CD4-positive, alpha-beta memory T cell (primary cell): ENCODE measurements at regions of chr3 and their contacts with region 1.

Region 1: GRCh38 chr3:123584988-123585937 is at the start of gene HACD2:
- DNase-seq: peak; percentile 90 to 96 (median 92)
- H3K4me3 ChIP-seq: peak within 1 kb of the TSS; percentile 80 to 99
- H3K4me3 Mint-ChIP-seq: peak within 1 kb of the TSS in 5 of 8 donors; percentile 88 to 93 (median 92)
- H3K27ac ChIP-seq: peak within 1 kb of the TSS; percentile 78
- H3K27ac Mint-ChIP-seq: peak within 1 kb of the TSS in 6 of 7 donors; percentile 76 to 94 (median 87)
- H3K4me1 ChIP-seq: peaks cover 38% of the 10 kb centered on the region
- H3K4me1 Mint-ChIP-seq: peaks cover 20 to 28% (median 22%) of the 10 kb centered on the region in 4 donors
- H3K27me3 ChIP-seq: no peaks in the 10 kb centered on the region
- H3K27me3 Mint-ChIP-seq: no peaks in the 10 kb centered on the region
- total RNA-seq, gene HACD2: 26.0 to 29.5 TPM

Region 2: DNA sequence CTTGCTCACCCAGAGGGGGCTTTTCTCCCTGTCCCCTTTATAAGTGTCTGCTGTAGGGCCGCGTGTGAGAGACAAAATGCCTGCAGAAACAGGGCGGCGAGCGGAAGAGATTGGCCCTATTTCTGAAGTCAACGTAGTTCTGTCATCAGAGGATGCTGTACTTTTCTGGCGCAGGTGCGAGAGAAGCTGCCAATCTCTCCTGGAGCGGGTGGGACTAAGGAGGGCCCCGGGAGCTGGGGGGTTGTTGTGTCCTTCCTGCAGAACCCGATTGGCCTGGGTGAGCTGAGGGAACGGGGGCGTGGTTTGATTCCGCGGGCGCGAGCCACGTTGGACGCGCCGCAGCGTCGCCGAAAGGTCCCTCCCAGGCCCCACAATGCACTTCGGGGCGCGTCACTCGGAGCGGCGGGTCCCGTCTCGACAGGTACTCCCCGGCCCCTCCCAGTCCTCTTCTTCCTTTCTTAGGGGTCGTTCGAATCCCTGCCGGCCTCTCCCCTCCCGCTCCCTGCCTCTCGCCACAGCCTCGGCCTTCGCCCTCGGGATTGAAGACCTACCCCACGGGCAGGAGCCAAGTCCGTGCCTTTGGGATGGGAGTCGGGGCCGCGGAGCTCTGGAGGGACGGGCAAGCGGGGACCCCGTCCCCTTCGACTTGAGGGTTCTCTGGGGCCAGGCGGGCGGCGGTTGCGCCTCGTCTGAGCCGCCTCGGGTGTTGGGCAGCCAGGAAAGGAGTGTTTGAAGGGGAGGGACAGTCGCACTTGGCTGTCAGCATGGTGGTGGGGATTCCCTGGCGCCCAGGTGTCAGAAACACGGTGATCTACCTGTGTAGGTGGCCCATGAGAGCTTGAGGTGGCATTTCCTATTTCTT is 383.5 kb before region 1 on chr3 and contains the start of gene SEC22A:
- CTCF ChIA-PET with region 1: interaction called, 3 read pairs
- POLR2A ChIA-PET with region 1: interaction called, 6 read pairs
- intact Hi-C with region 1: loop called (anchors 1 kb)
- DNase-seq: peak; percentile 95 to 98 (median 98)
- H3K4me3 ChIP-seq: peak within 1 kb of the TSS; percentile 82 to 91
- H3K4me3 Mint-ChIP-seq: peak within 1 kb of the TSS; percentile 88 to 98 (median 90)
- H3K27ac ChIP-seq: peak within 1 kb of the TSS; percentile 98
- H3K27ac Mint-ChIP-seq: peak within 1 kb of the TSS; percentile 92 to 99 (median 98)
- H3K4me1 ChIP-seq: peaks cover 20% of the 10 kb centered on the region
- H3K4me1 Mint-ChIP-seq: peaks cover 21 to 38% (median 28%) of the 10 kb centered on the region in 4 donors
- H3K27me3 ChIP-seq: no peaks in the 10 kb centered on the region
- H3K27me3 Mint-ChIP-seq: peaks cover 0 to 4% of the 10 kb centered on the region in 2 donors
- total RNA-seq, gene SEC22A: 19.4 to 23.2 TPM

Region 3: GRCh38 chr3:123632161-123632655 is 46.9 kb after region 1 on chr3:
- CTCF ChIA-PET with region 1: no interaction called
- POLR2A ChIA-PET with region 1: no interaction called
- intact Hi-C with region 1: no loop called
- DNase-seq: no peak
- H3K4me3 ChIP-seq: no peak overlapping the region
- H3K4me3 Mint-ChIP-seq: no peak overlapping the region
- H3K27ac ChIP-seq: no peak overlapping the region
- H3K27ac Mint-ChIP-seq: no peak overlapping the region
- H3K4me1 ChIP-seq: no peaks in the 10 kb centered on the region
- H3K4me1 Mint-ChIP-seq: no peaks in the 10 kb centered on the region
- H3K27me3 ChIP-seq: no peaks in the 10 kb centered on the region
- H3K27me3 Mint-ChIP-seq: peaks cover 3 to 4% of the 10 kb centered on the region in 2 donors

Region 4: GRCh38 chr3:123960781-123961507 is 375.7 kb after region 1 on chr3 and contains the start of gene CCDC14:
- CTCF ChIA-PET with region 1: no interaction called
- POLR2A ChIA-PET with region 1: no interaction called
- intact Hi-C with region 1: loop called (anchors 2 kb)
- DNase-seq: peak; percentile 61 to 83 (median 65)
- H3K4me3 ChIP-seq: peak within 1 kb of the TSS; percentile 27 to 93
- H3K4me3 Mint-ChIP-seq: peak within 1 kb of the TSS; percentile 96 to 99 (median 98)
- H3K27ac ChIP-seq: peak within 1 kb of the TSS; percentile 65
- H3K27ac Mint-ChIP-seq: peak within 1 kb of the TSS; percentile 88 to 97 (median 93)
- H3K4me1 ChIP-seq: peaks cover 26% of the 10 kb centered on the region
- H3K4me1 Mint-ChIP-seq: peaks cover 13 to 38% (median 23%) of the 10 kb centered on the region in 4 donors
- H3K27me3 ChIP-seq: no peaks in the 10 kb centered on the region
- H3K27me3 Mint-ChIP-seq: peaks cover 0 to 2% of the 10 kb centered on the region in 2 donors
- total RNA-seq, gene CCDC14: 46.0 to 47.0 TPM

Region 5: DNA sequence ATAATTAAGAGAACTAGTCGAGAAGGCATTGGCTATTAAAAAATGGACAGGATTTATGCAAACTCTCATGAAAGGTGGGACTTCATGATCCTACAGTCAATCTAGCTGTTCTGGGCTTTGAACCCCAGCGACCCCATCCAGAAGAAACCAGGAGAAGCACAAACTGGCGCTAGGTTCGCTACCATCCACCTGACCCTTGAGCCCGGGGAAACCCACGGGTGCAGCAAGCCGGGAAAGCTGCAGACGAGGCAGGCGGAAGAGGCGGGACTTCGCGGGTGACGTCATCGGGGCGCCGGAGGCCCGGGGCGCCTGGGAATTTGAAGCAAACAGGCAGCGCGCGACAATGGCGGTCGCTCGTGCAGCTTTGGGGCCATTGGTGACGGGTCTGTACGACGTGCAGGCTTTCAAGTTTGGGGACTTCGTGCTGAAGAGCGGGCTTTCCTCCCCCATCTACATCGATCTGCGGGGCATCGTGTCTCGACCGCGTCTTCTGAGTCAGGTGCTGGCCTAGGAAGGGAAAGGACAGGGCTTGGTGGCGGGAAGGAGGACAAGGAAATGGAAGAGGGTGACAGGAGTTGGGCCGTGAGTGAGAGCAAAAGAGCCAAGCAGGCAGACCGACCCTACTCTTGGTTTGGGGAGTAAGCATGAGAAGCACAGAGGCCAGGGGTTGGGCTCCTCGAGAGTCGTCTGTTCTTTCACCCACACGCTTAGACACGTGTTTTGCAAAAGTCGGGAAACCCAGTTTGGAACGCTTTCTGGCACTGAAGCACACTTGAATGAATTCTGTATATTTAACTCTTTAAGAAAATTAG is 1145.1 kb after region 1 on chr3 and contains the start of gene UMPS:
- CTCF ChIA-PET with region 1: no interaction called
- POLR2A ChIA-PET with region 1: no interaction called
- intact Hi-C with region 1: loop called (anchors 1 kb)
- DNase-seq: peak; percentile 89 to 93 (median 90)
- H3K4me3 ChIP-seq: peak within 1 kb of the TSS; percentile 77 to 85
- H3K4me3 Mint-ChIP-seq: peak within 1 kb of the TSS; percentile 97 to 100 (median 99)
- H3K27ac ChIP-seq: peak within 1 kb of the TSS; percentile 63
- H3K27ac Mint-ChIP-seq: peak within 1 kb of the TSS; percentile 95 to 100 (median 99)
- H3K4me1 ChIP-seq: peaks cover 36% of the 10 kb centered on the region
- H3K4me1 Mint-ChIP-seq: peaks cover 25 to 41% (median 32%) of the 10 kb centered on the region in 4 donors
- H3K27me3 ChIP-seq: peaks cover 6% of the 10 kb centered on the region
- H3K27me3 Mint-ChIP-seq: peaks cover 4 to 9% of the 10 kb centered on the region in 2 donors
- total RNA-seq, gene UMPS: 25.5 to 31.5 TPM